ENCODE measurements at regions of chrX and their contacts with region 1.

Region 1: DNA sequence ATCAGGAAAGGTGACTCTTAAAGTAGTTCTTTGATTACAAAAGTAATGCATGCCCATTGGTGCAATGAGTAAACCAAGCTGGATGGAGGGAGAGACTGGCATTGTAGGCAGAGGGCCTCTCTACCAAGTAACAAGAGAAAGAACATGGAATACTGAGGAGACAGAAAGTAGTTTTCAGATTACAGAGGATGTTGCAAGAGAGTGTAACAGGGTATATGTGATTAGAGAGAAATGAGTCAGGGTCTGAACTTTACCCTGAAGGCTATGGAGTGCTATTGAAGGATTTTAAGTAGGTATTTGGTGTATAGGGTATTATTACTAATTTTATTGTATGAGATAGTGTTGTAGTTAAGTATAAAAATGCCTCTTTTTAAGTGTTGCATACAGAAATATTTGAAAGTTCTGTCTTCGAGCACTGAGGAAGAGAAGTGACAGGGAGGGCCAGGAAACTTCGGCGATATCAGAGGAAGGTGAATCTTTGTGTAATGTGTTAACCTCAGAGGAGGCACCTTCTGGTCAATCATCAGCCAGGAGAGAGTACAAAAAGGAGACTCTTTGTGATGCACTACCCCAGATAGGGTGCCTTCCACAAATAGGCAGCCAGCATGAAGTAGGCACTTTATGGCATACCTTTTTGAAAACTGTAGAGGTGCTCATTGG is 8.2 kb downstream of the NKAP start:
- DNase-seq: peak; percentile 47
- ATAC-seq: peak; percentile 98
- H3K4me3 ChIP-seq: peak overlapping the region in 1 of 3 experiments; percentile 16; a peak in 1 of 6 replicates
- H3K27ac ChIP-seq: peak overlapping the region; percentile 73
- H3K4me1 ChIP-seq: peaks cover 18% of the 10 kb centered on the region
- H3K27me3 ChIP-seq: no peaks in the 10 kb centered on the region
- CTCF ChIP-seq: no peak
- EP300 ChIP-seq: no peak
- POLR2A ChIP-seq: peak; percentile 41 to 64; a peak in 3 of 4 replicates
- RAD21 ChIP-seq: no peak

Region 2: DNA sequence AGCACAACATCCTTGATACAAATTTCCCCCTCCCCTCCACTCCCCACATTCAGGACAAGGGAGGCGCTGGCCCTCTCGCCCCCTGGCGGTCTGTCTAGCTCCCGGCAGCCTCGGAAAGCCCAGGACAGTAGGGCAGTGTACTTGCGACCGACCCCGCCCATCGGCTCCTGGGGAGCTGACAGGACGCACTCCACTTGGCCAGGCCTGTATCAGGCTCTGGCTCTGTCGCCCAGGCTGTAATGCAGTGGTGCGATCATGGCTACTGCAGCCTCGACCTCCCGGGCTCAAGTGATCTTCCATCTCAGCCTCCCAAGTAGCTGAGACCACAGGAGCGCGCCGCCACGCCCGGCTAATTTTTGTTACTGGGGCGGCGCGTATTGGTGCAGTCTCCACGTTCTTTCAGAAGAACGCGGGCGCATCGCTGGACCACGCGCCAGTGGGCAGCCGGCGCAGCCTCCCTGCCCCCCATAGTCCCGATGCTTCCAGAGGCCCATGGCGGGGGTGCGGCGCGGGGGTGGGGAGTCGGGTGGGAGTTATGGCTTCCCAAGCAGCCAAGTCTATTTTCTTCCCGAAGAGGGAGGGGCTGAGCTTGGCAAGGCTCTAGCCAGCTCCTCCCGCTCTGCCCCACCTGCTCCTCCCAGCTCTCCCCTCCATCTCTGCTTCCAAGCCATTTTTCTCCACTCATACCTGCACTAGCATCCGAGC is 47.5 kb before region 1 on chrX:
- CTCF ChIA-PET with region 1: no interaction called
- POLR2A ChIA-PET with region 1: no interaction called
- in situ Hi-C with region 1: no loop called
- intact Hi-C with region 1: loop called (anchors 2 kb)
- DNase-seq: peak; percentile 54
- ATAC-seq: peak; percentile 79
- H3K4me3 ChIP-seq: no peak overlapping the region
- H3K27ac ChIP-seq: no peak overlapping the region
- H3K4me1 ChIP-seq: no peaks in the 10 kb centered on the region
- H3K27me3 ChIP-seq: no peaks in the 10 kb centered on the region; a peak in 1 of 5 replicates
- CTCF ChIP-seq: peak; percentile 80
- EP300 ChIP-seq: no peak
- POLR2A ChIP-seq: no peak
- RAD21 ChIP-seq: 0 out of 2 replicates have a peak, but pooled peaks have one; percentile 18

Region 3: DNA sequence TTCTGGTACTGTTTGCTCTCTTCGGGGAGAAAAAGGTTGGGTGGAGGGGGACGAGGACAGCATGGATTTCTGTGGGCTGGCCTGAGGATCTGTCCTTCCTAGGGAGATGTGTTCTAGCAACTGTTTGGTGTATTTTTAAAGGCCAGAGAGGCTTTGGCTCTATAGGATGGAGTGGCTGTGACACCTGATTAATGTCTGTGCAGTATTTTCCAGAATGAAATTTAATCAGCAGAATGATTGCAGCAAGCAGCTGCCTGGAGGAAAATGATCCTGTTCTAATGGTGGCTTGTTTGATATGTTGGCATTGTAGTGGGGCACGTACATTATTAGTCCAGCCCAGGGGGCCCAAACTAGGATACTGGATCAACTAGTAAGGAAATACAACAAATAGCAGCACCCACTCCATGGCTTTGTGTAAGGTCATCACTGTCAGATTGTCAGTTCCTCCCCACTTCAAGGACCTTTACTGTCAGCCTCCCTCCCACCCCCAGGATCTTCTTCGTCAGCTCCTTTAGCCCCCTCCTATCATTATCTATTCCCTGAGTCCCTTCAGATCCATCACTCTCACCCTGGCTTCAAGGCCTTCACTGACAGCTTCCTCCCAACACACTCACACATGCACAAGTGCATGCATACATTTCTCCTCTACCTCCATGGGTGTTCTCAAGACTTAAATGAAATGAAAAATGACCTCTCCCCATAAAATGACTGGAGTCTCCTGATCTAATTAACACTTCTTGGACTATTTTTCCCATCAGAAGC is 386.4 kb after region 1 on chrX:
- CTCF ChIA-PET with region 1: no interaction called
- POLR2A ChIA-PET with region 1: no interaction called
- in situ Hi-C with region 1: no loop called
- intact Hi-C with region 1: no loop called
- DNase-seq: no peak
- ATAC-seq: no peak
- H3K4me3 ChIP-seq: no peak overlapping the region
- H3K27ac ChIP-seq: no peak overlapping the region
- H3K4me1 ChIP-seq: no peaks in the 10 kb centered on the region
- H3K27me3 ChIP-seq: no peaks in the 10 kb centered on the region
- CTCF ChIP-seq: no peak
- EP300 ChIP-seq: no peak
- POLR2A ChIP-seq: no peak
- RAD21 ChIP-seq: no peak